Tibial artery (tissue), 4 donors: ENCODE measurements at regions of chr11 and their contacts with region 1.

Region 1: GRCh38 chr11:85941380-85941973 is 86.3 kb downstream of the CCDC83 start:
- DNase-seq: peak; percentile 63 to 74
- H3K4me3 ChIP-seq: no peak overlapping the region
- H3K27ac ChIP-seq: no peak overlapping the region
- H3K4me1 ChIP-seq: no peaks in the 10 kb centered on the region
- H3K27me3 ChIP-seq: no peaks in the 10 kb centered on the region
- CTCF ChIP-seq: peak; percentile 79 to 82

Region 2: GRCh38 chr11:85867751-85868150 is 73.7 kb before region 1 on chr11:
- intact Hi-C with region 1: loop called (anchors 10 kb)
- DNase-seq: no peak
- H3K4me3 ChIP-seq: no peak overlapping the region
- H3K27ac ChIP-seq: no peak overlapping the region
- H3K4me1 ChIP-seq: no peaks in the 10 kb centered on the region
- H3K27me3 ChIP-seq: no peaks in the 10 kb centered on the region
- CTCF ChIP-seq: no peak

Region 3: DNA sequence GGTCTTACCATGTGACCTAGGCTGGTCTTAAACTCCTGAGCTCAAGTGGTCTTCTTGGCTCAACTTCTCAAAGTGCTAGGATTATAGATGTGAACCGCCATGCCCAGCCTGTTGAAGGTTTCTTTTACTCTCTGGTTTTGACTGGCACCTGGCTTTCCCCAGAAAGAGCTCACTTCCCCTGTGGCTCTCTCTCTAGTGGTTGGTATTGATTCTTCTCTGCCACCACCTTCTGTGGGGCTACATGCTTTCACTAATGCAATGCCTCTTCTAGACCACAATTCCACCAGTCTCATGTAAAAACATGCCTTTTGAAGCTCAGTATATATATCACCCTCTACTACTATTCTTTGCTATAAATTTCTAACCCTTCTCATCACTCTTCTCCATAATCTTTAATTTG is 19.1 kb before region 1 on chr11:
- intact Hi-C with region 1: no loop called
- DNase-seq: no peak
- H3K4me3 ChIP-seq: no peak overlapping the region
- H3K27ac ChIP-seq: no peak overlapping the region
- H3K4me1 ChIP-seq: no peaks in the 10 kb centered on the region
- H3K27me3 ChIP-seq: peaks cover 0 to 5% of the 10 kb centered on the region in 2 donors
- CTCF ChIP-seq: no peak

Region 4: GRCh38 chr11:86202013-86202336 is 260.5 kb after region 1 on chr11:
- intact Hi-C with region 1: loop called (anchors 5 kb)
- DNase-seq: no peak
- H3K4me3 ChIP-seq: peak overlapping the region; percentile 38 to 42
- H3K27ac ChIP-seq: peak overlapping the region in 1 of 2 donors; percentile 45
- H3K4me1 ChIP-seq: peaks cover 0 to 27% (median 4%) of the 10 kb centered on the region in 4 donors
- H3K27me3 ChIP-seq: no peaks in the 10 kb centered on the region
- CTCF ChIP-seq: no peak

Region 5: DNA sequence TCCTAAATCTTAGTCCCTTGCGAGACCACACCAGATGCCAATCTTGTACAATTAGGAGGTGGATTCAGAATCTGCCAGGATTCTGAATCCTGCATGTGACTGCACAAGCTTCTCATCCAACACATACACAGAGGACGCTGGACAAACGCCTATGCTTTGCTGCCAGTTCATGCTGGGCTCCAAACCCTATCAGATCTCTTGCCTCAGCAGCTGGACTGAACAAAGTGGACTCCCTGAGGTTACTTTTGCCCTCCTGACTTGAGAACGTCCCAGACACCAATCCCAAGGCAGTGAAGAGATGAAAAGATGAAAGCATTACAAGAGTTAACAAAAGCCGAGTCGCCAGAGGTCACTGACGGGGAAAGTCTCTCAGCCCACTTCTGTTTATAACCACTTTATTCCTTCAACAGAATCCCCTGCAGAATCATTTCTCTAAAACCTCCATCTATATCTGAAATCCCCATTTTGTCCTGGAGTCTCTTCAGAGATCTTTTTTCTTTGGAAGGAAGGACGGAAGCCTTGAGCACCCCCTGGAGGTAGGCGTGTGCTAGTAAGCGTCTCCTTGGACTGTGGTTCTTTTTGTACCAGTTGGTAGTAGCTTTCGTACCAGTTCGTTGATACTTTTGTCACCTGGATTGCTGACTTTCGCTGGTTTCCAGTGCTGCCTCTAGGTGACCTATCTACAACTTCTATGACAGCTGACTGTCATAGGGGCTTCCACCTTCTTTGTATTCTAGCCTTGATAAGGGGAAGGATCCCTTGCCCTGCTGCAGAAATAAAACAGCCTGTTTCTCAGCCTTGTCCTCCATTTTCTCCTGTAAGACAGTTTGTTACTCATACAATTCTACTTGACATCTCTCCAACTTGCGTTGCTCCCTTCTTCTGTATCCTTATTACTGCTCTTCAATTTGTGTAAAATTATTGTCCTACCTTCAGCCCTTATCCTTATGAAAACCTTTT is 276.9 kb after region 1 on chr11:
- intact Hi-C with region 1: loop called (anchors 5 kb)
- DNase-seq: peak; percentile 54 to 81
- H3K4me3 ChIP-seq: peak overlapping the region; percentile 33 to 43
- H3K27ac ChIP-seq: peak overlapping the region; percentile 10 to 60
- H3K4me1 ChIP-seq: peaks cover 0 to 14% (median 1%) of the 10 kb centered on the region in 4 donors
- H3K27me3 ChIP-seq: no peaks in the 10 kb centered on the region
- CTCF ChIP-seq: peak; percentile 85 to 90